ENCODE measurements at regions of chr1 and their contacts with region 1.

Region 1: GRCh38 chr1:31904339-31905092 is 33.7 kb downstream of the PTP4A2 start:
- DNase-seq: peak; percentile 43
- ATAC-seq: peak; percentile 34 to 49

Region 2: DNA sequence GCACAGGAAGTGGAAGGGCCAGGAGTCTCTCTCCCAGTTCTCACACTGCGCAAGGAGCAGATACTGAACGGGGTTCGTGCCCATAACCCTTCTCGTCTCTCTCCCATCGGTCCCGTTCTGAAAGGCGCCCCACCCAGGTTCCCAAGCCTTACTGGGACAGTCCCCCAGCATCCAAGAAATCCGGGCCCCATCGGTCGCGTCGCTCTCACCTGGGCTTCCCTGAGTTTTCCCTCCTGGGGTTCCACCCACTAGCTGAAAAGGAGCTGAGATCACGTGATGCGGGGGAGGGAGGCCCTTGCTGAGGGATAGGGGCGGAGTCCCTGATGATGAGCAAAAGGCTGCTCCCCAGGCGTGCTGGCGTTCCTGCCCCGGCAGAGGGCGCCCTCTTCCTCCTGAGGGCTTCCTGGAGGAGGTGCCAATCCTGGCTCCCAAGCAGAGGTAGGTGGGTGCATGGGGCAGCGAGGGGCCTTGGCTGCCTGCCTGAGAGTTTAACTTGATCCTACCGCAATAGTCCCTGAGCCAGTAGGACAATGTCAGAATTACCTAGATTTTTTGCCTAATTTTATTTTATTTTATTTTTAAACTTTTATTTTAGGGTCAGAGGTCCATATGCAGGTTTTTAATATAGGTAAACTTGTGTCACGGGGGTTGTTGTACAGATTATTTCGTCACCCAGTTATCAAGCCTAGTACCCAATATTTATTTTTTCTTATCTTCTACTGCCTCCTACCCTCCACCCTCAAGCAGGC is 88.6 kb before region 1 on chr1 and contains the start of gene SPOCD1:
- intact Hi-C with region 1: loop called in 1 of 2 experiments (anchors 10 kb)
- DNase-seq: peak; percentile 84
- ATAC-seq: peak; percentile 70 to 85
- total RNA-seq, gene SPOCD1: 0.18 to 1.2 TPM